Motor neuron (in vitro differentiated cells): ENCODE measurements at regions of chr1 and their contacts with region 1.

Region 1: DNA sequence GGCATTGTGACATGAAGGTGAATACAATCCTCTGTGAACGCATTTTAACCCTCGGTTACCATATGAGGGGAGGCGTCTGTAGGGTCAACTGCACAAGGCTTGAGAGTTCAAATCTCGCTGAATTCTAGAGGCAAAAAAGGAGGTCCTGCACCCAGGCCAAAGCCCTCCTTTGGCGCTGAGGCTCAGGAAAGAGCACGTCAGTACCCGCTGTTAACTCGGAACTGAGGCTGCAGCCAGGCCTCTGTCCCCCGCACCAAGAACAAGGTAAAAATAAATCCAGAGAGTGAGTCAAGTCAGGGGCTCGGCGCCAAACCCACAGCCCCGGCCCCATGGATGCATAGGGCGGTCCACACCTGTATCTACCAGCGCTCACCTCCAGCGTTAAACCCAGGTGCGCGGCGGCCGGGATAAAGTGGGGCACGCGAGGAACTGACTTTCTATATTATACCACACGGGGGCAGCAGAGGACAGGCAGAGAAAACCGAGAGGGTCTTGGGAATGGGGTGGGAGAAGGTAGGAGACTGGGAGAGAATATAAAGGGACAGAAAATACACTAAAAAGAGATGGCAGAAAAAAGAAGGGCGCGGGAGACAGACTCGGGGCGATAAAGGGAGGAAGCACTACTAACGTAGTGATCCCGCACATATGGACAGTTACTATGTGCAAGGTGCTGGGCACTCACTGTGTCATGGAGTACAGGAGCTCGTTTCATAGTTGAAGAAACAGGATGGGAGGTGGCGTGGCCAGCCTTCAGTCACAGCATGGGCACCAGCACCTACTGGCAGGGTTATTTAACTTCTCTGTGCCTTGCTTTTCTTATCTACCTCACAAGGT is 54.8 kb downstream of the DMRTA2 start:
- ATAC-seq: peak; percentile 64 to 94 (median 74)
- H3K4me3 ChIP-seq: no peak overlapping the region
- H3K27ac ChIP-seq: no peak overlapping the region
- H3K4me1 ChIP-seq: peaks cover 0 to 3% of the 10 kb centered on the region in 2 donors

Region 2: DNA sequence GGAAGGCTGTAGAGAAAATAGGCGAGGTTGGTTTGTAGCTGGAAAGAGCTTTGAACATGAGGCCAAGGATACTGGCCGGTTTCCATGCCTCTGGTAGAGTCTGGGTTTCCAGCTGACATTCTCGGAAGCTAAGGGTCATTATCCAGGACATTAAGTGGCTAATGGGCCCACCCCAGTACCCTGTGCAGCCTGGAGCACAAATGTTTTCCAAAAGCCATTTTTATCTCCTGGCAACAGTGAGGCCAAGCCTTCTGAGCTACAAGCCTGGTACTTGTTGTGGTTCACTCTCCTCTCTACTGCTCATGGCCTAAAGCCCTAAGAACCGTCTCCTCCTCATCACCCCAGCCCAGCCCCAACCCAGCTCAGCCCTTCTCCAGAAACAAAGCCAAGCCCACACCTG is 68.1 kb before region 1 on chr1:
- in situ Hi-C with region 1: no loop called
- ATAC-seq: peak in 1 of 8 experiments; percentile 24
- H3K4me3 ChIP-seq: no peak overlapping the region
- H3K27ac ChIP-seq: no peak overlapping the region
- H3K4me1 ChIP-seq: peaks cover 4 to 12% of the 10 kb centered on the region in 2 donors

Region 3: GRCh38 chr1:50704126-50704525 is 335.7 kb after region 1 on chr1:
- in situ Hi-C with region 1: loop called in 1 of 9 experiments (anchors 25 kb)
- ATAC-seq: peak in 2 of 8 experiments; percentile 45 to 50
- H3K4me3 ChIP-seq: no peak overlapping the region
- H3K27ac ChIP-seq: no peak overlapping the region
- H3K4me1 ChIP-seq: peaks cover 7% of the 10 kb centered on the region in 2 donors

Region 4: DNA sequence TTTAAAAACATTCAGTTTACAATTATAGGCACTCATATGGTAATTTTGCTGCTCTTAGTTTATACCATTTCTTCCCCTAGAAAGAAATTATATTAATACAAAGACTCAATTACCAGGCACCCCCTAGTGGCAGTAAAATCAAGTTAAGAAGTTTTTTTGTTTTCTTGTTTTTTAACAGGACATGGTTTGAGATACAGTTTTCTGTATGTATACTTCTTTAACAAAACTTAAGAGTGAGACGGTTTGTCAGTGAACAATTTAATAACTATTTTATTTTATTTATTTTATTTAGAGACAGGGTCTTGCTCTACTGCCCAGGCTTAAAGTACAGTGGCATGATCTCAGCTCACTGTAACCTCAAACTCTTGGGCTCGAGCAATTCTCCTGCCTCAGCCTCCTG is 367.0 kb after region 1 on chr1:
- in situ Hi-C with region 1: loop called in 1 of 9 experiments (anchors 25 kb)
- ATAC-seq: no peak
- H3K4me3 ChIP-seq: no peak overlapping the region
- H3K27ac ChIP-seq: no peak overlapping the region
- H3K4me1 ChIP-seq: no peaks in the 10 kb centered on the region